Gastrocnemius medialis (tissue), 4 donors: ENCODE measurements at regions of chr7 and their contacts with region 1.

Region 1: GRCh38 chr7:93055543-93056107 is 62.2 kb downstream of the SAMD9 start:
- DNase-seq: no peak
- ATAC-seq: no peak
- H3K4me3 ChIP-seq: no peak overlapping the region
- H3K27ac ChIP-seq: no peak overlapping the region
- H3K4me1 ChIP-seq: no peaks in the 10 kb centered on the region
- H3K27me3 ChIP-seq: no peaks in the 10 kb centered on the region
- CTCF ChIP-seq: peak; percentile 28 to 78 (median 64)
- POLR2A ChIP-seq: no peak

Region 2: GRCh38 chr7:92421676-92422435 is 633.8 kb before region 1 on chr7:
- in situ Hi-C with region 1: no loop called
- intact Hi-C with region 1: loop called (anchors 10 kb)
- DNase-seq: no peak
- ATAC-seq: no peak
- H3K4me3 ChIP-seq: no peak overlapping the region
- H3K27ac ChIP-seq: no peak overlapping the region
- H3K4me1 ChIP-seq: no peaks in the 10 kb centered on the region
- H3K27me3 ChIP-seq: peaks cover 0 to 5% (median 3%) of the 10 kb centered on the region in 3 donors
- CTCF ChIP-seq: no peak
- POLR2A ChIP-seq: no peak

Region 3: GRCh38 chr7:92614660-92615174 is 440.9 kb before region 1 on chr7:
- in situ Hi-C with region 1: loop called in 3 of 4 experiments (anchors 5 to 25 kb)
- intact Hi-C with region 1: no loop called
- DNase-seq: no peak
- ATAC-seq: no peak
- H3K4me3 ChIP-seq: no peak overlapping the region
- H3K27ac ChIP-seq: no peak overlapping the region
- H3K4me1 ChIP-seq: no peaks in the 10 kb centered on the region
- H3K27me3 ChIP-seq: no peaks in the 10 kb centered on the region
- CTCF ChIP-seq: no peak
- POLR2A ChIP-seq: no peak

Region 4: DNA sequence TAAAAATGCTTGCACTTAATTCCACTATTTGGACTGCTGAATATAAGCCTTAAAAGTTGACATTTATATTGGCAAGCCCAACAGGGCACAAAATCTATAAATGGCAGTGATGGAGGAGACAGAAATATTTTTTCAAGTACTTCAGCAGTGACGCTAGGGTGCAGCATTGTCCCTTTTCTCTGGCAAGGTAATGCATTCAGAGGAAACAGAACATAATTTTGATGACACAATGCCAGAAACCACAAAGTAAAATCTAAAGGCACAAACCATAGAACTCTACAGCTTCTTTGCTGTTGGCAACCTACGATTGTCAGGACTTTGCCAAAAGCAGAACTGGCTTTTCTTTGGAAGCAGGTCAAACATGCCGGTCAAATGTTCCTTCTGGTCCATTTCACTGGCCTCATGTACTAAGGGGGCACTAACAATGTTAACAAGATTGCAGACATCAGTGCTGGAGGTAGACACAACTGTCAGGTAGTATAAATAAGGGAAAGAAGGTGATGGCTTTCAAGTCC is 434.5 kb before region 1 on chr7:
- in situ Hi-C with region 1: loop called (anchors 5 to 25 kb)
- intact Hi-C with region 1: loop called (anchors 1 kb)
- DNase-seq: peak in 1 of 2 donors; percentile 28
- ATAC-seq: peak; percentile 45 to 66
- H3K4me3 ChIP-seq: no peak overlapping the region
- H3K27ac ChIP-seq: peak overlapping the region in 1 of 4 donors; percentile 29
- H3K4me1 ChIP-seq: peaks cover 0 to 3% of the 10 kb centered on the region in 2 donors
- H3K27me3 ChIP-seq: no peaks in the 10 kb centered on the region
- CTCF ChIP-seq: peak; percentile 45 to 72 (median 57)
- POLR2A ChIP-seq: no peak